ENCODE measurements at regions of chr14 and their contacts with region 1.

Region 1: GRCh38 chr14:104800015-104800770 is 708 bp upstream of the ZBTB42 start:
- DNase-seq: peak; percentile 95
- H3K4me3 Mint-ChIP-seq: peak overlapping the region; percentile 21
- H3K27ac Mint-ChIP-seq: peak overlapping the region; percentile 78
- H3K4me1 Mint-ChIP-seq: peaks cover 20% of the 10 kb centered on the region
- H3K27me3 Mint-ChIP-seq: peaks cover 1% of the 10 kb centered on the region

Region 2: GRCh38 chr14:104610749-104611310 is 189.4 kb before region 1 on chr14:
- intact Hi-C with region 1: no loop called
- DNase-seq: no peak
- H3K4me3 Mint-ChIP-seq: no peak overlapping the region
- H3K27ac Mint-ChIP-seq: no peak overlapping the region
- H3K4me1 Mint-ChIP-seq: no peaks in the 10 kb centered on the region
- H3K27me3 Mint-ChIP-seq: peaks cover 14% of the 10 kb centered on the region

Region 3: DNA sequence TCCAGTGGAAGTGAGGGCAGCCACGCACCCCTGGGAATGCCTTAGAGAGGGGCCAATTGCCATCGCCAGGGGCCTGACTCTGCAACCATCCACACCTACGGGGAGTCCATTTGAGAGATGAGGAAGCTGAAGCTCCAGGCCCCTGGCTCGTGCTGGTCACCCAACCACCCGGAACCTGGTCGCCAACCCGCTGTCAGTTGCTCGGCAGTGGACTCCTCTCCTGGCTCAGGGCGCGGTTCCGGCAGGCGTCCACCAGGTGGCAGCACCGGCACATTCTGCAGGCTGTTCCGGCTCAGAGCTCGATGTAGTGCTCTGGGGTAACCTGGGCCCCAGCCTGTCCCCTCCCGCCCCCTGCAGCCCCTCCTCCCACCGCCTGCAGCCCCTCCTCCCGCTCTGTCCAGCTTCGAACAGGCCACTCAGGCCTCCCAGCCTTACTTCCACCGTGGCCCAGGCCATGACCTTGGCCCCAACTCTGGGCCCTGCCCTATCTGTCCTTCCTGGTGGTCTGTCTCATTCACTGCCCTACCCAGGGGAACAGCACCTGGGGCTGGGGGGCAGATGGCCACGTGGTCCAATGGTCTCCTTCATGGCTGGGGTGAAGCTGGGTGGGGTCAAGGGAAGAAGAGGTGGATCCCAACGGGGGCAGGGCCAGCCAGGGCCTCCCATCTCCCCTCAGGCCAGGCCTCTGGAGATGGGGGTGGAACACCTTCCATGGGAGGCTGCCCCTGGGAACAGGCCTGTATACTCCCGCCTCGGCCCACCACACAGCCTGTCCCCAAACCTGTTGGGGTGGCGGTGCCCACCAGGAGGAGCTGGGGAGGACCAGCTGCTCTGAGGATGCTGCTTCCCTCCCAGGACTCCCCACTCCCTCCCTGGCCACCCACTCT is 31.5 kb before region 1 on chr14:
- intact Hi-C with region 1: loop called (anchors 2 kb)
- DNase-seq: peak; percentile 98
- H3K4me3 Mint-ChIP-seq: no peak overlapping the region
- H3K27ac Mint-ChIP-seq: no peak overlapping the region
- H3K4me1 Mint-ChIP-seq: peaks cover 3% of the 10 kb centered on the region
- H3K27me3 Mint-ChIP-seq: no peaks in the 10 kb centered on the region

Measured in activated CD4-positive, alpha-beta T cell treated with anti-CD3 and anti-CD28 coated beads, Interleukin-2, amount 10 ng/mL, durations not matched to agents 24 days and 14 days (primary cell).